Activated naive CD4-positive, alpha-beta T cell treated with anti-CD3 and anti-CD28 coated beads for 36 hours (primary cell): ENCODE measurements at regions of chr16 and their contacts with region 1.

Region 1: DNA sequence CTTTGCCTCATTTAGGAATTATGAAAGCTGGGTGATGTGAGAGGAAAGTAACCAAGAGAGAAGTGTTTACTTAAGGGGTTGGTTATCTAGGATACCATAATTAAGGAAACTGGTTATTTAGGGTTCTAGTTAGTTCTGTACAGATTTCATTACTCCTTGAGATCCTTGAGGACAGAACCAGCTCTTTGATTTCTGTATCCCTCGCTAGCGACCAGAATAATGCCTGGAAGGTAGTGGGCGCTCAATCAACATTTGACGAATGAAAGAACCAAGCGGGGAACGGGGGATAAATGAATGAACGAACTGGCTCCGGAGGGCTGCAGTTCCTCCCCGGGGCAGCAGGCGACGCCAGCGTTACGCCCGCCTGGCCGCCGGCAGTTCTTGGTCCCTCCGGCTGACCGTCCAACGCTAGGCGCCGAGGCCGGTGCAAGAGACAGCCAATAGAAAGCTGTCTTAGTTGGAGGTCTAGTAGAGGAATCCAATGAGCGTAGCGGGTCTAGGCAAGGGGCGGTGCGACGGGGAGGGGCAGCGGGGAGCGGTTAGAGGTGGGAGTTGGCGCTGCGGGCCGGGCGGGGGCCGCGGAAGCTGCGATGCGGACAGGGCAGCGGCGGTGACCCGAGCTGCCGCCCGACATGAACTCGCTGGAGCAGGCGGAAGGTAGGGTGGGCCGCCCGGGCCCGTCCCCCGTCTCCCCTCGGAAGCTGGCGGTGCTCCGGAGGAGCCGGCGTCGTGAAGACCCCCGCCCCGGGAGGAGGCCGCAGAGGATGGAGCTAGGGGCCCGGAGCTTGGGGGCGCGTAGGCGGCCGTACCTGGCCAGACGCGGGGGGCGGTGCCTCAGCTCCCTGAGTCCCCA is at the start of gene CNEP1R1:
- DNase-seq: peak; percentile 94
- H3K4me3 Mint-ChIP-seq: peak within 1 kb of the TSS; percentile 91
- H3K27ac Mint-ChIP-seq: peak within 1 kb of the TSS; percentile 82
- H3K4me1 Mint-ChIP-seq: peaks cover 22% of the 10 kb centered on the region
- H3K27me3 Mint-ChIP-seq: no peaks in the 10 kb centered on the region
- total RNA-seq, gene CNEP1R1: 28.2 to 30.9 TPM

Region 2: GRCh38 chr16:49855280-49855821 is 169.6 kb before region 1 on chr16:
- CTCF ChIA-PET with region 1: no interaction called
- intact Hi-C with region 1: loop called (anchors 5 kb)
- DNase-seq: peak; percentile 69
- H3K4me3 Mint-ChIP-seq: peak overlapping the region; percentile 58
- H3K27ac Mint-ChIP-seq: no peak overlapping the region
- H3K4me1 Mint-ChIP-seq: peaks cover 10% of the 10 kb centered on the region
- H3K27me3 Mint-ChIP-seq: peaks cover 40% of the 10 kb centered on the region

Region 3: DNA sequence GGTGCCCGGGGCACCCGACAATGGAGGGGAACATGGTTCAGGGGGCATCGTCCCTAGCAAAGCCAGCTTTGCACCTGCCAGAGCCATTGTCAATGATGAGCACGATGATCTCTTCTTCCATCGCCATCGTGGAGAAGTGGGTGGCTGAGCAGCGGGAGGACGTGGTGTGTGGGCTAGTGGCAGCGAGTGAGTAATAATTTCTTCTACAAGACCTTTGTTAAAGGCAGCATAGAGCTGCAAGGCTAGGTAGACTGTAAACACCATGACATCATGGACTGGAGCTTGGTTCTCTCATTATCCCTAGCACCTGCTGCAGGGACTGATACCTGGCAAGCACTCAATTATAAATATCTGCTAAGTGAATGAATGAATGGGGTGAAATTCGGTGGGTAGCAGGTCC is 34.2 kb after region 1 on chr16:
- CTCF ChIA-PET with region 1: interaction called, 13 read pairs
- intact Hi-C with region 1: no loop called
- DNase-seq: no peak
- H3K4me3 Mint-ChIP-seq: no peak overlapping the region
- H3K27ac Mint-ChIP-seq: no peak overlapping the region
- H3K4me1 Mint-ChIP-seq: no peaks in the 10 kb centered on the region
- H3K27me3 Mint-ChIP-seq: no peaks in the 10 kb centered on the region

Region 4: GRCh38 chr16:50121721-50122445 is 97.0 kb after region 1 on chr16:
- CTCF ChIA-PET with region 1: interaction called, 7 read pairs
- intact Hi-C with region 1: loop called (anchors 1 kb)
- DNase-seq: peak; percentile 93
- H3K4me3 Mint-ChIP-seq: peak overlapping the region; percentile 22
- H3K27ac Mint-ChIP-seq: peak overlapping the region; percentile 75
- H3K4me1 Mint-ChIP-seq: peaks cover 20% of the 10 kb centered on the region
- H3K27me3 Mint-ChIP-seq: no peaks in the 10 kb centered on the region

Region 5: DNA sequence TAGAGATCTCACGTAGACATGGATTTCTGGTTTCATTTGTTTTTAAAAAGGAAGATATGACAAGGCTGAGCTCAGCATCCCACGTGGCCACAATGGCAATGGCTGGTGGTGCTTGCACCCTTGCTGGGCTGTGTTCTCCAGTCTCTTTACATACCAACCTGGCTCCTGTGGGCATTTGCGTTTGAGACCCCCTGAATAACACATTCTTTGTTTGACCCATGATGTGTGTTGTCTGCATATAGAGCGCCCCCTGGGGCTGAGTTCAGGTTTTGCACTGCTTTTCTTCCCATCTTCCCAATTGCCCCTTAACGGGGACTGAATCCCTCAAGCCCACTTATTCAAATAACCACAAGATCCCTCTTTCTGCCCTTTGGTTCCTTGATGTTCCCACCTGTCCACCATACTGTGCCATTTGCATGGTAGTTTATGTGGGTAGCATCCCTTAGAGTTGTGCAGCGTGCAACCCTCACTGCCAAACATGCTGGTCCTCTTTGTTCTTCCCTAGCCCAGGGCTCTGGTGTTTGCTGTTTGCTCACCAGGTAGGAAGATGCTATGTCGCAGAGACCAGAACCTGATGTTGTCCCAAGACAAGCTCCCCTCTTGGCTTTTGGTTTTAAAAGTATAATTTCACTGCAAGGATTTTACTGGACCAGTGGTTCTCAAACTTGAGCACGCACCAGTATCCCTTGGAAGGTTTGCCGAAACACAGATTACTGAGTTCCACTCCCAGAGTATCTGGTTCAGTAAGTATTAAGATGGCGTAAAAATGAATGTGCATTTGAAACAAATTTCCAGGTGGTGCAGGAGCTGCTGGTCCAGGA is 484.8 kb after region 1 on chr16:
- CTCF ChIA-PET with region 1: no interaction called
- intact Hi-C with region 1: loop called (anchors 2 kb)
- DNase-seq: peak; percentile 67
- H3K4me3 Mint-ChIP-seq: no peak overlapping the region
- H3K27ac Mint-ChIP-seq: no peak overlapping the region
- H3K4me1 Mint-ChIP-seq: no peaks in the 10 kb centered on the region
- H3K27me3 Mint-ChIP-seq: no peaks in the 10 kb centered on the region